ENCODE measurements at regions of chr17 and their contacts with region 1.

Region 1: DNA sequence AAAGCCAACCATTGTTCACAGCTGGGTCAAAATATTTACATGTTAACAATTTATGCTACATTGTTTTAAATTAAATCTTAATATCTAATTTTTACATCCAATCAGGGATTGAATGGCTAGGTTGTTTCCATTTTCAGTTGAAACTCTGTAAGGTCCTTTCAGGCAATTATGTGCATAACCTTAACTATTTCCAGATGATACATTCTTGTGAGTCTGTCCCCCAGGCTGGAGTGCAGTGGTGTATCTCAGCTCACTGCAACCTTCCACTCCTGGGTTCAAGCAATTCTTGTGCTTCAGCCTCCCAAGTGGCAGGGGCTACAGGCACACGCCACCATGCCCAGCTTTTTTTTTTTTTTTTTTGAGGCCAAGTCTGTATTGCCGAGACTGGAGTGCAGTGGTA is 10.4 kb downstream of the CDC42EP4 start:
- DNase-seq: no peak
- H3K4me3 ChIP-seq: no peak overlapping the region
- H3K27me3 ChIP-seq: no peaks in the 10 kb centered on the region
- CTCF ChIP-seq: no peak

Region 2: GRCh38 chr17:72954579-72954978 is 346.8 kb before region 1 on chr17:
- CTCF ChIA-PET with region 1: no interaction called
- POLR2A ChIA-PET with region 1: interaction called, 17 read pairs
- DNase-seq: no peak
- H3K4me3 ChIP-seq: no peak overlapping the region
- H3K27me3 ChIP-seq: no peaks in the 10 kb centered on the region
- CTCF ChIP-seq: no peak

Region 3: GRCh38 chr17:73215447-73215846 is 85.9 kb before region 1 on chr17:
- CTCF ChIA-PET with region 1: no interaction called
- POLR2A ChIA-PET with region 1: no interaction called
- DNase-seq: no peak
- H3K4me3 ChIP-seq: no peak overlapping the region
- H3K27me3 ChIP-seq: no peaks in the 10 kb centered on the region
- CTCF ChIP-seq: no peak

Region 4: GRCh38 chr17:73247726-73248125 is 53.6 kb before region 1 on chr17:
- CTCF ChIA-PET with region 1: no interaction called
- POLR2A ChIA-PET with region 1: no interaction called
- DNase-seq: no peak
- H3K4me3 ChIP-seq: no peak overlapping the region
- H3K27me3 ChIP-seq: no peaks in the 10 kb centered on the region; the same call in 1 of the 2 replicates
- CTCF ChIP-seq: peak; percentile 37

Measured in BJ (cell line).